ENCODE measurements at regions of chr6 and their contacts with region 1.

Region 1: DNA sequence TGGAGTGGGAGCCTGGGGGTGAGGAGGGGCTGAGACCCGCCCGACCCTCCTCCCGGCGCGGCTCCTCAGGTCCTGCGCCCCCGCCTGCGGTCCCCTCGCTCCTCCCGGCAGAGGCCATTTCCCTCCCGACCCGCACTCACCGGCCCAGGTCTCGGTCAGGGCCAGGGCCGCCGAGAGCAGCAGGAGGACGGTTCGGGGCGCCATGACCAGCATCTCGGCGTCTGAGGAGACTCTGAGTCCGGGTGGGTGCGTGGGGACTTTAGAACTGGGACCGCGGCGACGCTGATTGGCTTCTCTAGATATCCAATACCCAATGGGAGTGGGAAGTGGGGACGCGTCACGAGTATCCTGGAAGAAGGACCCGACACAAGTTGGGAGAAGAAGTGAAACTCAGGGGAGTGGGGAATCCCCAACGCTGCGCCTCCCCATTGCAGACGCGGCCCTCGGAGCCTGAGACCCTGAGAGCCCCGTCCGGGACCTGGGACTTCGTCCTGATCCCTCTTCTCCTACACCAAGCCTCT is at the start of gene HLA-B:
- DNase-seq: peak; percentile 71 to 88
- H3K4me3 ChIP-seq: peak within 1 kb of the TSS in 2 of 3 donors; percentile 51 to 54
- H3K27ac ChIP-seq: peak within 1 kb of the TSS; percentile 66 to 87 (median 73)
- H3K4me1 ChIP-seq: peaks cover 3 to 4% of the 10 kb centered on the region in 2 donors
- H3K27me3 ChIP-seq: no peaks in the 10 kb centered on the region
- CTCF ChIP-seq: no peak
- POLR2A ChIP-seq: no peak
- total RNA-seq, gene HLA-B: 328 to 1,292 (median 594) TPM

Region 2: GRCh38 chr6:31267651-31268368 is 89.2 kb before region 1 on chr6:
- intact Hi-C with region 1: loop called (anchors 10 kb)
- DNase-seq: no peak
- H3K4me3 ChIP-seq: no peak overlapping the region
- H3K27ac ChIP-seq: no peak overlapping the region
- H3K4me1 ChIP-seq: no peaks in the 10 kb centered on the region
- H3K27me3 ChIP-seq: no peaks in the 10 kb centered on the region
- CTCF ChIP-seq: no peak
- POLR2A ChIP-seq: no peak

Measured in thyroid gland (tissue), 4 donors.